Activated T-helper 2 cell treated with anti-CD3 and anti-CD28 coated beads, Interferon-gamma antibody, Interleukin-2, Interleukin-4, amounts not matched to agents 10 μg/mL and 5 μg/mL and 100 μg/mL, durations not matched to agents 14 hours and 24 hours and 36 hours (primary cell): ENCODE measurements at regions of chr13 and their contacts with region 1.

Region 1: DNA sequence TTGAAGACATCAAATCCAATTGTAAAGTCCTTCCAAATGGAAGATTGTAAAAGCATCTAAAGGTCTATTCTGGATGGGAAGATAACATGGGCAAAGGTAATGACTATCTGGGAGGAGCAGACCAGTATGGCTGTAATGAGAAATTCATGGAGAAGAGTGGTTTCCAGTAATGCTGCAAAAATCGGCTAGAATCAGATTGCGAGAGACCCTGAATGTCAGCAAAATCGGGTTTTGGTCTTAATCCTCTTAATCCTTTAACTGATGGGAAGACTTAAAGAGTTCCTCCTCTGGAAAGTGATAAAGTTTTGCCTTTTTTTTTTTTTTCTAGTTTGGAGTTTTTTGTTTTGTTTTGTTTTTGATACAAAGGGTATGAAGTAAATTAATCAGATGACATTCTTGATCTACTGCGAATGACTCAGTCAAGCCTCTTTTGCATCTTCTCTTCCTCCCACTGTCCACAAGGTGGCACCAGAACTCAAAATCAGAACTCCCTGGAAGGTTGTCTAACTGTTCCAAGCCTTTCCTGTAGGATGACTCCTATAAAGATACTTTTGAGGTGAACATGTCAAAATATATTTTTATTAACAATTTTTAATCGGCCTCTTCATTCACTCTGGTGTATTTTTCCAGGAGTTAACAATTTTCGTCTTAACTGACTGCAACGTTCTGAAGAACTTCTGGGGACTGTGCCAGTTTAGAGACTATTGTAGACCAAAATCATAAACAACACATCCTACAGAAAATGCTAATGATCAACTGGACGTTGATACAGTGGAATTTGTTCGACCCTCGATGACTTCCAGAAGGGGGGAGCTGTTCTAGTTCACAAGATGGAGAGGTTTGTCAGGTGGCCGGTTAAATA is 213.3 kb upstream of the MIR17HG start:
- DNase-seq: no peak
- H3K4me3 Mint-ChIP-seq: no peak overlapping the region
- H3K27ac Mint-ChIP-seq: no peak overlapping the region
- H3K4me1 Mint-ChIP-seq: no peaks in the 10 kb centered on the region
- H3K27me3 Mint-ChIP-seq: no peaks in the 10 kb centered on the region

Region 2: GRCh38 chr13:90238413-90238812 is 895.8 kb before region 1 on chr13:
- intact Hi-C with region 1: no loop called
- DNase-seq: no peak
- H3K4me3 Mint-ChIP-seq: no peak overlapping the region
- H3K27ac Mint-ChIP-seq: no peak overlapping the region
- H3K4me1 Mint-ChIP-seq: no peaks in the 10 kb centered on the region
- H3K27me3 Mint-ChIP-seq: no peaks in the 10 kb centered on the region

Region 3: DNA sequence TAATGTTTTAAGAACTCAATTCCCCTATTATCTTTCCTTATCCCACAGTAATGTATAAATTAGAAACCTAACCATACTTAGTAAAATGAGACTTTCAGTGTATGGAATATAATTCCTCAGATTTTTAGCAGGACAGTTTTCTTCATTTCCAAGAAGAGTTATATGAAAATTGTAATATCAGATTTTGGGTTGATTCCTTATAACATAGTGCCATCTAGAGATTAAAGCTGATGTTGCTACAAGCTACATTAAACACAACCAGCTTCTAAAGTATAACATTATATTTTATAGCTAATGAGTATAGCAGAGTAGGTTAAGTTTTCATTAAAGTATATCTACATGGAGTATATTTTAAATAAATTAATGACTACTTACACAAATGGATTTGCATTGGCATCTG is 113.6 kb after region 1 on chr13:
- intact Hi-C with region 1: loop called (anchors 5 kb)
- DNase-seq: no peak
- H3K4me3 Mint-ChIP-seq: no peak overlapping the region
- H3K27ac Mint-ChIP-seq: no peak overlapping the region
- H3K4me1 Mint-ChIP-seq: no peaks in the 10 kb centered on the region
- H3K27me3 Mint-ChIP-seq: no peaks in the 10 kb centered on the region

Region 4: DNA sequence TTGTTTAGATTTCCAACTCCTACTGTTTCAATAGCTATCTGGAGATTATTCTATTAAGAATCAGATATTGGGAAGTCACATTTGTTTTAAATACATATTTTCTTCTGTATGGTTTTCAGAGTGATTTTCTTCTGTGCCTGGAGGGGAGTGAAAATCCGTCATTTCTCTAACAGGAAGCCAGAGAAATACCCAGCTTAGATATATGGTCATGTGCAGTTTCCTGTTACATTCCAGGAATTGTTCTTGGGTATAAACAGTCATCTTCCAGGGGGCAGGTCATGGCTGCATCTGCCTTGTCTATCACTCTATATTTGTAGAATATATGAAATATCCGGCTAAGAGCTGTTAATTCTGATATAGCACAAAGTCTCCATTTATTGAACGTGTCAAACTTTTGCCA is 135.9 kb after region 1 on chr13:
- intact Hi-C with region 1: no loop called
- DNase-seq: no peak
- H3K4me3 Mint-ChIP-seq: no peak overlapping the region
- H3K27ac Mint-ChIP-seq: no peak overlapping the region
- H3K4me1 Mint-ChIP-seq: peaks cover 4% of the 10 kb centered on the region
- H3K27me3 Mint-ChIP-seq: no peaks in the 10 kb centered on the region